MCF 10A (cell line): ENCODE measurements at regions of chr3 and their contacts with region 1.

Region 1: DNA sequence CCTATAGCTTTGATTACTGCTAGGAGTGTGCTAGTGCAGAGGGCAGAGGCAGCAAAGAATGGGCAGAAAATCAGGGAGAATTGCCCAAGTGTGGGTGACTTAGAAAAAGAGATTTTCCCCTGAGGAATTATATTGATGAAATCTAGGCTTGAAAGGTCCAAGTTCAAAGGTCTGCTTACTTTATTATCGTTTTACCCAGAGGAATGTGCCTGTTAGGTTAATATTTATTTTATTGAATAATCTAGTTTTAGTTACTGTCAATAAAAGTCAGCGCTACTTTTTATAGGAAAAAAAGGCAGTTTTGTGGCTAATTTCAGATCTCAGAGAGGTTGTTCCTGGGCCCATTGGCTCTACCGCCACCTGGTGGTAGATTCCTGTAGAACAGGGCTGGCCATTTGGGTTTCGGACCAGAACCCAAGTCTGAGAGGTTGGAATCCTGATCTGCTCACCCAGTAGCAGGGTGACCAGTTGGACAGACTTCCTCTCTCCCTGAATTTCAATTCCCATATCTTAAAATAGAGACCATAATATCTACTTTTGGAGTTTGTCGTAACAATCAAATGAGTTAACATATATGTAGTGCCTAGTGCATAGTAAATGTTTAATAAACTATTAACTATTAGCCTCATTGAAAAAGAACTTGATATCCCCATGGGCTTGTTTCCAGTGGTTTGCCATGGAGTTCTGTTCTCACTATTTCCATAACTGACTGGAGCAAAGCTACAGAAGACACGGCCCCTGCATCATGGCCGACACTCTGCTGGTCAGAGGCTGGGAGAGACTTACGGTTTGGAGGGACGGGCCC is 62.7 kb upstream of the ZNF148 start:
- DNase-seq: peak; percentile 59
- H3K4me3 Mint-ChIP-seq: no peak overlapping the region
- H3K27ac Mint-ChIP-seq: no peak overlapping the region
- H3K4me1 Mint-ChIP-seq: peaks cover 14% of the 10 kb centered on the region
- H3K27me3 Mint-ChIP-seq: no peaks in the 10 kb centered on the region
- CTCF ChIP-seq: peak; percentile 90

Region 2: DNA sequence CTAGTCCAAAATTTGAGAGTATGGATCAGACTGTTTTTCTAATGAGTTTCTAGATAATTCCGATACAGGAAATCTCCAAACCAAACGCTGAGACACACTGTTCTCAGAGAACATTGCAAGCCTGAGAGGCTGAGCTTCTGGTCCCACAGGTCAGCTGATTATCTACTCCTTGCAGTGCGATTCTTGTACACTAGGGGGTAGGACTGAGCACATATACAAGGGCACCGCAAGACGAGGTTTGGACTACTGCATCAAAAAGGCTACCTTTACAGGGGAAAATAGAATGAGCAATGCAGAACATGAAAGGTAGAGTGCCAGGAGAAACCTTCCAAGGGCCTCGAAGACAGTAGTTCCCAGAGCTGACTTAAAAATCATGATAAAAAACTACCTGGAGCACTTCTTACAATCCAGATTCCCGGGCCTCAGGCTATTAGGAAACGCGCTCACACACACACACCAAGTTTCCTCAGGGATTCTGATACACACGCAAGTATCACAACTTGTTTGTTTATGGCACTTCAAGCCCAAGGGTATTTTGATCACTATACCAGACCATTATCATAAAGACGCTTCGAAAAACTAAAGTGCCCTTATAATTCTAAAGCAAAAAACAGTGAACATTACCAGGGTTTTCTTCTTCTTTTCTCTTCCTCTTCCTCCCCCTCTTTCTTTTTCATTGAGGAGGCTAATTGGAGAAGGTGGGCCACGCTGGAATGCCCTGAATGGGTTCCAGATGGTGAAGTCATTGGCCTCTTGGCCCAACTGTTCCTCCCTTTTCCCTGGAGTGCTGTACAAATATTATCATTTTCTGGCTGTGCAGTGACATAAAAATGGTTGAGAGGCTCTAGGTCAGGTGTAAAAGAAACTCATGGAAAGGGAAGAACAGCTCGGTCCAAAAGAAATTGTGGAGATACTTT is 287.1 kb before region 1 on chr3:
- CTCF ChIA-PET with region 1: no interaction called
- POLR2A ChIA-PET with region 1: no interaction called
- intact Hi-C with region 1: loop called (anchors 1 kb)
- DNase-seq: peak; percentile 81
- H3K4me3 Mint-ChIP-seq: no peak overlapping the region
- H3K27ac Mint-ChIP-seq: no peak overlapping the region
- H3K4me1 Mint-ChIP-seq: no peaks in the 10 kb centered on the region
- H3K27me3 Mint-ChIP-seq: no peaks in the 10 kb centered on the region
- CTCF ChIP-seq: peak; percentile 55

Region 3: GRCh38 chr3:125220727-125221429 is 217.0 kb before region 1 on chr3:
- CTCF ChIA-PET with region 1: no interaction called
- POLR2A ChIA-PET with region 1: no interaction called
- intact Hi-C with region 1: loop called (anchors 10 kb)
- DNase-seq: no peak
- H3K4me3 Mint-ChIP-seq: no peak overlapping the region
- H3K27ac Mint-ChIP-seq: no peak overlapping the region
- H3K4me1 Mint-ChIP-seq: no peaks in the 10 kb centered on the region
- H3K27me3 Mint-ChIP-seq: no peaks in the 10 kb centered on the region
- CTCF ChIP-seq: no peak

Region 4: GRCh38 chr3:125651244-125651643 is 213.4 kb after region 1 on chr3:
- CTCF ChIA-PET with region 1: no interaction called
- POLR2A ChIA-PET with region 1: no interaction called
- intact Hi-C with region 1: no loop called
- DNase-seq: peak; percentile 12
- H3K4me3 Mint-ChIP-seq: no peak overlapping the region
- H3K27ac Mint-ChIP-seq: no peak overlapping the region
- H3K4me1 Mint-ChIP-seq: peaks cover 14% of the 10 kb centered on the region
- H3K27me3 Mint-ChIP-seq: no peaks in the 10 kb centered on the region
- CTCF ChIP-seq: no peak